Right ventricle myocardium superior (tissue), 1 donor: ENCODE measurements at regions of chr12 and their contacts with region 1.

Region 1: GRCh38 chr12:751192-751998 is 984 bp upstream of the WNK1 start:
- DNase-seq: peak; percentile 95
- ATAC-seq: peak; percentile 73

Region 2: GRCh38 chr12:569803-570434 is 181.5 kb before region 1 on chr12:
- intact Hi-C with region 1: loop called (anchors 5 kb)
- DNase-seq: peak; percentile 94
- ATAC-seq: peak; percentile 75

Region 3: GRCh38 chr12:591167-592023 is 160.0 kb before region 1 on chr12:
- intact Hi-C with region 1: loop called (anchors 5 kb)
- DNase-seq: peak; percentile 93
- ATAC-seq: peak; percentile 92

Region 4: GRCh38 chr12:642633-643474 is 108.5 kb before region 1 on chr12:
- intact Hi-C with region 1: loop called (anchors 5 kb)
- DNase-seq: peak; percentile 89
- ATAC-seq: peak; percentile 73

Region 5: GRCh38 chr12:810671-811415 is 59.4 kb after region 1 on chr12:
- intact Hi-C with region 1: loop called (anchors 10 kb)
- DNase-seq: no peak
- ATAC-seq: no peak

Region 6: DNA sequence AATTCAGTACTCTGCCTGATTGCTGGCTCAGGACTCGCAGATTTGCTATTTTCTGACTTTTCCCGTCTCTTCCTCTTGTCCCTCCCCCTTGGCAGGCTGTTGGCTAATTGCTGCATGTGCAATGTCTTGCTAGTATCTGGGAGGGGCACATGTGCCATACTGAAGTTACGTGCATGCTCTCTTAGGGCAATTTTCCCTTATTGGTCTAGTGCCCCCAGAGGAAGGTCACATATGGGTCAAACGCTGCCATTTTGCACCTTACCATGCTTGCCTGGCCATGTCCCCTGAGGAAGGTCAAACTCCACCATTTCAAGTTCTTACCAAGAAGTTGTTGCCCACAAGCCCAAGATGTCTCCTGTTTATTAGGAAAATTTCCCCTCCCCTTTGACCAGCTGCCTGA is 225.8 kb after region 1 on chr12:
- intact Hi-C with region 1: no loop called
- DNase-seq: no peak
- ATAC-seq: no peak